ENCODE measurements at regions of chr21 and their contacts with region 1.

Region 1: GRCh38 chr21:15199414-15200364 is 134.9 kb upstream of the NRIP1 start:
- DNase-seq: no peak
- ATAC-seq: no peak
- H3K4me3 ChIP-seq: no peak overlapping the region
- H3K27ac ChIP-seq: no peak overlapping the region
- H3K4me1 ChIP-seq: no peaks in the 10 kb centered on the region
- H3K27me3 ChIP-seq: no peaks in the 10 kb centered on the region
- CTCF ChIP-seq: no peak
- EP300 ChIP-seq: no peak
- POLR2A ChIP-seq: no peak
- RAD21 ChIP-seq: no peak

Region 2: GRCh38 chr21:15255763-15256465 is 56.2 kb after region 1 on chr21:
- CTCF ChIA-PET with region 1: no interaction called
- POLR2A ChIA-PET with region 1: no interaction called
- RAD21 ChIA-PET with region 1: no interaction called
- SMC1A ChIA-PET with region 1: no interaction called
- in situ Hi-C with region 1: no loop called
- intact Hi-C with region 1: loop called (anchors 5 kb)
- DNase-seq: no peak
- ATAC-seq: no peak
- H3K4me3 ChIP-seq: no peak overlapping the region
- H3K27ac ChIP-seq: no peak overlapping the region
- H3K4me1 ChIP-seq: no peaks in the 10 kb centered on the region
- H3K27me3 ChIP-seq: no peaks in the 10 kb centered on the region; a peak in 1 of 4 replicates
- CTCF ChIP-seq: no peak
- EP300 ChIP-seq: no peak
- POLR2A ChIP-seq: no peak
- RAD21 ChIP-seq: no peak